A549 (cell line): ENCODE measurements at regions of chr10 and their contacts with region 1.

Region 1: GRCh38 chr10:58164517-58164916 is 103.2 kb downstream of the IPMK start:
- DNase-seq: no peak
- ATAC-seq: no peak
- H3K4me3 ChIP-seq: no peak overlapping the region
- H3K27ac ChIP-seq: no peak overlapping the region
- H3K4me1 ChIP-seq: no peaks in the 10 kb centered on the region
- CTCF ChIP-seq: no peak
- EP300 ChIP-seq: no peak
- POLR2A ChIP-seq: no peak
- RAD21 ChIP-seq: no peak

Region 2: DNA sequence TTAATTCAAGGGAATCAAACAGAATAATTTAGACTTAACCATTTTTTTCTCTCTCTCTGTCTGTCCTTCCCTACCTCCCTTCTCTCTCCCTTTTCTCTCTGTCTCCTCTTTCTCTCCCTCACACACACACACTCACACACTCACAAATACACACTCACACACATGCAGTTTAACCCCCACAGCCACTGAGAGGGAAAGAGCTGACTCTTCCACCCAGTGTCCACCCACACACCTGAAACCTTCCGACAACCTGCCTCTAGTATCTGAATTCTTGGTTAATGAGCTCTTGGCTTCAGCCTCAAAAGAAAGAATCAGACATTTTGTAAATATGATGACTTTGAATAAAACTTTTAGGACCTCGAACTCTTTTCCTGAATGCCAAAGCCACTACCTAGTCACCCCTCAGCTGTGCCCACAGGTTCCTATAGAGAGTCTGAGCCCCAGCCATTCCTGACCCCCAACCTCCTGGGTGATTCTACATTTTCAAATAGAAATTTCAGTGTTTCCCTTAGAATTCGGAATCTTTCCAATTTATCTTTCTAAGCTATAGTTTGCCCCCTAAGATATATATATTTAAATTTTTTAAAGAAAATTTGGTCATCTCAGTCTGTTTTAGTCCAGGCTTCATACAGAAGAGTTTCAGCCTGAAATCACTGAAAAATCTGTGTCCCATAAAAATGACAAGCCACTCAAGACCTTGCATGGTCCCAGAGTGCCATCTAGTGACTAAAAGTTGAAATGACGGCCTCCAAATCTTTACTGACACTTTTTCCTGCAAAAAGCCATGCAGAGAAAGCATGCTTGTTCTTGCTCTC is 99.6 kb before region 1 on chr10:
- CTCF ChIA-PET with region 1: no interaction called
- POLR2A ChIA-PET with region 1: no interaction called
- DNase-seq: peak; percentile 24 to 63
- ATAC-seq: peak in 1 of 2 experiments; percentile 68; a peak in 3 of 6 replicates
- H3K4me3 ChIP-seq: no peak overlapping the region
- H3K27ac ChIP-seq: peak overlapping the region; percentile 20 to 60; a peak in 4 of 6 replicates
- H3K4me1 ChIP-seq: peaks cover 7% of the 10 kb centered on the region
- CTCF ChIP-seq: peak; percentile 92
- EP300 ChIP-seq: no peak
- POLR2A ChIP-seq: no peak
- RAD21 ChIP-seq: peak; percentile 97

Region 3: GRCh38 chr10:58152673-58153263 is 11.7 kb before region 1 on chr10:
- CTCF ChIA-PET with region 1: interaction called, 27 read pairs
- POLR2A ChIA-PET with region 1: no interaction called
- DNase-seq: peak in 1 of 2 experiments; percentile 62
- ATAC-seq: peak; percentile 59 to 70; a peak in 5 of 6 replicates
- H3K4me3 ChIP-seq: no peak overlapping the region
- H3K27ac ChIP-seq: no peak overlapping the region
- H3K4me1 ChIP-seq: no peaks in the 10 kb centered on the region
- CTCF ChIP-seq: peak; percentile 72
- EP300 ChIP-seq: no peak
- POLR2A ChIP-seq: no peak
- RAD21 ChIP-seq: peak; percentile 83 to 85